HepG2 (cell line): ENCODE measurements at regions of chr4 and their contacts with region 1.

Region 1: GRCh38 chr4:13289391-13289790 is 194.7 kb downstream of the RAB28 start:
- DNase-seq: no peak
- ATAC-seq: no peak
- H3K4me3 ChIP-seq: no peak overlapping the region
- H3K27ac ChIP-seq: no peak overlapping the region
- H3K4me1 ChIP-seq: peaks cover 2% of the 10 kb centered on the region
- H3K27me3 ChIP-seq: no peaks in the 10 kb centered on the region
- CTCF ChIP-seq: no peak
- EP300 ChIP-seq: no peak
- POLR2A ChIP-seq: no peak
- RAD21 ChIP-seq: no peak

Region 2: GRCh38 chr4:13349096-13349495 is 59.7 kb after region 1 on chr4:
- CTCF ChIA-PET with region 1: no interaction called
- POLR2A ChIA-PET with region 1: no interaction called
- in situ Hi-C with region 1: no loop called
- intact Hi-C with region 1: loop called (anchors 1 kb)
- DNase-seq: no peak
- ATAC-seq: no peak
- H3K4me3 ChIP-seq: no peak overlapping the region
- H3K27ac ChIP-seq: no peak overlapping the region
- H3K4me1 ChIP-seq: no peaks in the 10 kb centered on the region
- H3K27me3 ChIP-seq: no peaks in the 10 kb centered on the region
- CTCF ChIP-seq: no peak
- EP300 ChIP-seq: no peak
- POLR2A ChIP-seq: no peak
- RAD21 ChIP-seq: no peak